ENCODE measurements at regions of chr2 and their contacts with region 1.

Region 1: GRCh38 chr2:144516981-144517865 is 2.7 kb downstream of the ZEB2 start:
- DNase-seq: peak; percentile 87
- H3K4me3 ChIP-seq: peak overlapping the region; percentile 73
- CTCF ChIP-seq: no peak

Region 2: DNA sequence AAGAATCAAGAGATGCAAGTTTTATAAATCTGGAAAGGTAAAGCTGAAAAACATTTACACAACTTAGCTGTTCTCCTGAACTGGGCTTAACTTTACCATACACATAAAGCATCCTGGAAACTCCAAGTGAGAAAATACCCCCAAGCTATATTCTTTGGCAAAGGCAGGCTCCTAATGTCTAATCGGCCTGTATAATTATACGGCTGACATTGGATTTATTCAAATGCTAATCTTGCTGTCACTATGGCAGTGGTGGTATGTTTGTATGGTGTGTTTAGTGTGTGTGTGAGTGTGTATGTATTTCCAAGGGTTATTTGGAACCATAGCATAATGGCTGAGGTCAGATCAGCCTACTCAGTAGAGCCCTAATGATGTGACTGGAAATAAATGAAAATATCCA is 1034.5 kb after region 1 on chr2:
- in situ Hi-C with region 1: no loop called
- DNase-seq: no peak
- H3K4me3 ChIP-seq: no peak overlapping the region
- CTCF ChIP-seq: no peak

Region 3: GRCh38 chr2:145752091-145752806 is 1235.0 kb after region 1 on chr2:
- in situ Hi-C with region 1: loop called (anchors 25 kb)
- DNase-seq: peak; percentile 88
- H3K4me3 ChIP-seq: no peak overlapping the region
- CTCF ChIP-seq: peak; percentile 67

Measured in astrocyte of the cerebellum (primary cell).